ENCODE measurements at regions of chr19 and their contacts with region 1.

Region 1: DNA sequence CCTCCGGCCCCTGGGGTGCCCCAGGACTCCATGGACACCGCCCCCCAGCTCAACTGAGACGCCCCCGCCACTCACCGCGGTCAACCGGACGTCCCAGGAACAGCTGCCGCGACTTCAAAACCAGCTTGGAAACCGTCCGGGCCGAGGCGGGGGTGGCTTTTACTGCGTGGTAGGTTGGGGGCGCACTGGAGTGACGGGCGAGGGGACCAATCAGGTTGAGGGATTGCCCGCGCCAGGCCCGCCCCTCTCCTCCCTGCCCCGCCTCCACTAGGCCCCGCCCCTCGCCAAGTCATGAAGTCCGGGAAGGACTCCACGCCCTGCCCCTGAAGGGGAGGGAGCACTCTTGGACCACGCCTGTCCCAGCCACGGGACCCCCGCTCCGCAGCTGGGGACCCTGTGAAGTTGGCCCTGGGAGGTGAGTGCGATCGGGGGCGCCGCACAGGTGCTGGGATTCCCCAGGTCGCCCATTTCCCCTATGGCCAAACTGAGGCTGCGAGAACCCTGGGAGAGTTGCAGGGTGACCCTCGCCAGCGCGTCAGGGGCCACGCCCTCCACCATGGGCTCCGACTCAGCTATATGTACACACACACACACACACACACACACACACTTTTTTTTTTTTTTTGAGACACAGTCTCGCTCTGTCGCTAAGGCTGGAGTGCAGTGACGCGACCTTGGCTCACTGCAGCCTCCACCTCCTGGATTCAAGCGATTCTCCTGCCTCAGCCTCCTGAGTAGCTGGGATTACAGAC is at the start of gene PLIN3:
- DNase-seq: peak; percentile 96
- ATAC-seq: peak; percentile 95
- H3K4me3 Mint-ChIP-seq: peak within 1 kb of the TSS; percentile 80
- H3K27ac Mint-ChIP-seq: peak within 1 kb of the TSS; percentile 66
- H3K4me1 Mint-ChIP-seq: peaks cover 8% of the 10 kb centered on the region
- H3K27me3 Mint-ChIP-seq: no peaks in the 10 kb centered on the region; the same call in 1 of the 2 replicates
- CTCF ChIP-seq: no peak
- total RNA-seq, gene PLIN3: 61.3 to 72.1 TPM (median 71.2 TPM) in 3 replicates

Region 2: GRCh38 chr19:4844348-4845179 is 23.1 kb before region 1 on chr19:
- CTCF ChIA-PET with region 1: no interaction called
- POLR2A ChIA-PET with region 1: no interaction called
- DNase-seq: no peak
- ATAC-seq: no peak
- H3K4me3 Mint-ChIP-seq: no peak overlapping the region
- H3K27ac Mint-ChIP-seq: no peak overlapping the region
- H3K4me1 Mint-ChIP-seq: no peaks in the 10 kb centered on the region
- H3K27me3 Mint-ChIP-seq: no peaks in the 10 kb centered on the region
- CTCF ChIP-seq: no peak

Region 3: GRCh38 chr19:5417495-5418436 is 550.1 kb after region 1 on chr19:
- CTCF ChIA-PET with region 1: no interaction called
- POLR2A ChIA-PET with region 1: interaction called, 10 read pairs
- DNase-seq: no peak
- ATAC-seq: no peak
- H3K4me3 Mint-ChIP-seq: no peak overlapping the region
- H3K27ac Mint-ChIP-seq: peak overlapping the region; percentile 57; the same call in 1 of the 2 replicates
- H3K4me1 Mint-ChIP-seq: peaks cover 30% of the 10 kb centered on the region
- H3K27me3 Mint-ChIP-seq: peaks cover 11% of the 10 kb centered on the region
- CTCF ChIP-seq: no peak